ENCODE measurements at regions of chr10 and their contacts with region 1.

Region 1: DNA sequence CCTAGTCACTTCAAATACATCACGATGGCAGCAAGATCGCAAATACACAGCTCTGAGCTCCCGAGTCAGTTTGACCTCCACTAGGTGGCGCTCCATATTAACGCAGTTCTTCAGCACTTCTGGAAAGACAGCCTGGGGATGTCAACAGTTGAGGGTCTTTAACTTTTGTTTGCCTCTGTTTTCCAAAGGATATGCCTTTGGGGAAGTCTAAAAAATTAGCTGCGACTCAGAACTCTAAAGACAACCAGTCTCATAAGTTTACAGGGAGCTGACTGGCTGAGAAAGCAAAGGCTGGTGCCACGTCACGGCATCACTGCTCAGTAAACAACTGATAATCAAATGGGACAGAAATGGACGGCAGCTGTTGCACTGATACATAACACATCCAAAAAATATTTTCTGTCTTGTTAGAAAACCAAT is 458.8 kb downstream of the SORCS1 start:
- DNase-seq: peak in 1 of 2 experiments; percentile 17
- H3K4me3 ChIP-seq: no peak overlapping the region
- H3K27ac ChIP-seq: no peak overlapping the region
- H3K4me1 ChIP-seq: no peaks in the 10 kb centered on the region
- H3K27me3 ChIP-seq: no peaks in the 10 kb centered on the region
- CTCF ChIP-seq: peak; percentile 72

Region 2: GRCh38 chr10:106795619-106796018 is 89.9 kb after region 1 on chr10:
- CTCF ChIA-PET with region 1: no interaction called
- POLR2A ChIA-PET with region 1: no interaction called
- intact Hi-C with region 1: no loop called
- DNase-seq: no peak
- H3K4me3 ChIP-seq: no peak overlapping the region
- H3K27ac ChIP-seq: no peak overlapping the region
- H3K4me1 ChIP-seq: no peaks in the 10 kb centered on the region
- H3K27me3 ChIP-seq: 0 out of 2 replicates have a peak, but pooled peaks cover 11% of the 10 kb centered on the region
- CTCF ChIP-seq: no peak; the same call in 1 of the 2 replicates

Region 3: GRCh38 chr10:107814865-107815487 is 1109.3 kb after region 1 on chr10:
- CTCF ChIA-PET with region 1: no interaction called
- POLR2A ChIA-PET with region 1: no interaction called
- intact Hi-C with region 1: loop called (anchors 10 kb)
- DNase-seq: no peak
- H3K4me3 ChIP-seq: no peak overlapping the region
- H3K27ac ChIP-seq: no peak overlapping the region
- H3K4me1 ChIP-seq: no peaks in the 10 kb centered on the region
- H3K27me3 ChIP-seq: no peaks in the 10 kb centered on the region
- CTCF ChIP-seq: peak; percentile 57